ENCODE measurements at regions of chr10 and their contacts with region 1.

Region 1: DNA sequence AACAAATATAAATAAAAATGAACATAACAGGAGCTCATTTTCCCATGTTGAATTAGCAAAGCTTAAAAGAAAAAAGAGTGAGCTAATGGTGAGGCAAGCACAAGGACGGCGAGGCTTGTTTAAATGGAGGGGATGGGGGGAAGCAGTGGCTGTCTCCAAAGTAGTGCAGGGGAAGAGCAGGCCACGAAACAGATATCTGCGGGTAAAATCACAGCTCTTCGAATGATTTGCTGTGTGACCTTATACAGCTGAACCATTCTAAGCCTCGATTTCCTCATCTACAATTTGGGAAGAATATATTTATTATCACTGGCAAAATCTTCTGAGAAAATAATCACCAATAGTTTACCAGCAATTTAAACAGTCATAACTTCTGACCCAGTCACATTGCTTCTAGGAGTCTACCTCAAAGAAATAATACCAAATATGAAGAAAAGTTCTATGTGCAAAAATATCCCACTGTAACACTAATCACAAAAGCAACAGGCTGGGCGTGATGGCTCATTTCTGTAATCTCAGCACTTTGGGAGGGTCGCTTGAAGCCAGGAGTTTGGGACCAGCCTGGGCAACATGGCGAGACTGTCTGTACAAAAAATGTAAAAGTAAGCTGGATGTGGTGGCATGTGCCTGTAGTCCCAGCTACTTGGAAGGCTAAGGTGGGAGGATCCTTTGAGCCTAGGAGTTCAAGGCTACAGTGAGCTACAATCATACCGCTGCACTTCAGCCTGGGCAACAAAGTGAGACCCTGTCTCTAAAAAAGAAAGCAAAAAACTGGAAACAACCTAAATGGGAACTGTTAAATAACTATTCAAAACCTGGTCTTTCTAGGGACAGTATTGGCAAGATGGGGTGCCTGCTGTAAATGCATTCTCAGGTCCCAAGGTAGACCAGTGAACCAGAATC is 63.1 kb upstream of the ASAH2 start:
- DNase-seq: no peak
- ATAC-seq: no peak
- H3K4me3 ChIP-seq: no peak overlapping the region
- H3K4me3 Mint-ChIP-seq: no peak overlapping the region
- H3K27ac ChIP-seq: no peak overlapping the region
- H3K27ac Mint-ChIP-seq: no peak overlapping the region
- H3K4me1 ChIP-seq: no peaks in the 10 kb centered on the region
- H3K4me1 Mint-ChIP-seq: peaks cover 15 to 24% (median 16%) of the 10 kb centered on the region in 3 donors
- H3K27me3 ChIP-seq: no peaks in the 10 kb centered on the region
- H3K27me3 Mint-ChIP-seq: no peaks in the 10 kb centered on the region

Region 2: DNA sequence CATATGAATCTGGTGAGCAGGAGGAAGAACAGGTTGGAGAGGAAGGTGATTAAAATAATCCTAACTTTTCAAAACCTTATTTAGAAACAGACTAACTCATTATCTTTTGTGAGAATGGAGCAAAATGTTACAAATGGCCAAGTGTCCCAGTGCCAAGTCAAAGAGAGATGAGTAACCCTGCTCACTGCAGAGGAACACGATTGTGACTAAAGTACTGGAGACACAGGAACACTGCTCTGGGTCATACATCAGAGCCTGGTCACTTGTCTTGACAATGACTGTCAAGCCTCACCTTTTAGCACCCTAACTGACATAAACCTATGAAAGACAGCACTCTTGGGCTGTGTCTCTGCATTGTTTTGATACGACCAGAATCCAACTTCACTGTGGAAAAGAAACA is 200.6 kb after region 1 on chr10:
- CTCF ChIA-PET with region 1: no interaction called
- POLR2A ChIA-PET with region 1: no interaction called
- DNase-seq: no peak
- ATAC-seq: no peak
- H3K4me3 ChIP-seq: no peak overlapping the region
- H3K4me3 Mint-ChIP-seq: no peak overlapping the region
- H3K27ac ChIP-seq: no peak overlapping the region
- H3K27ac Mint-ChIP-seq: peak overlapping the region in 1 of 2 donors; percentile 5
- H3K4me1 ChIP-seq: peaks cover 21 to 25% of the 10 kb centered on the region in 2 experiments
- H3K4me1 Mint-ChIP-seq: peaks cover 65 to 69% (median 66%) of the 10 kb centered on the region in 3 donors
- H3K27me3 ChIP-seq: no peaks in the 10 kb centered on the region
- H3K27me3 Mint-ChIP-seq: no peaks in the 10 kb centered on the region

Region 3: DNA sequence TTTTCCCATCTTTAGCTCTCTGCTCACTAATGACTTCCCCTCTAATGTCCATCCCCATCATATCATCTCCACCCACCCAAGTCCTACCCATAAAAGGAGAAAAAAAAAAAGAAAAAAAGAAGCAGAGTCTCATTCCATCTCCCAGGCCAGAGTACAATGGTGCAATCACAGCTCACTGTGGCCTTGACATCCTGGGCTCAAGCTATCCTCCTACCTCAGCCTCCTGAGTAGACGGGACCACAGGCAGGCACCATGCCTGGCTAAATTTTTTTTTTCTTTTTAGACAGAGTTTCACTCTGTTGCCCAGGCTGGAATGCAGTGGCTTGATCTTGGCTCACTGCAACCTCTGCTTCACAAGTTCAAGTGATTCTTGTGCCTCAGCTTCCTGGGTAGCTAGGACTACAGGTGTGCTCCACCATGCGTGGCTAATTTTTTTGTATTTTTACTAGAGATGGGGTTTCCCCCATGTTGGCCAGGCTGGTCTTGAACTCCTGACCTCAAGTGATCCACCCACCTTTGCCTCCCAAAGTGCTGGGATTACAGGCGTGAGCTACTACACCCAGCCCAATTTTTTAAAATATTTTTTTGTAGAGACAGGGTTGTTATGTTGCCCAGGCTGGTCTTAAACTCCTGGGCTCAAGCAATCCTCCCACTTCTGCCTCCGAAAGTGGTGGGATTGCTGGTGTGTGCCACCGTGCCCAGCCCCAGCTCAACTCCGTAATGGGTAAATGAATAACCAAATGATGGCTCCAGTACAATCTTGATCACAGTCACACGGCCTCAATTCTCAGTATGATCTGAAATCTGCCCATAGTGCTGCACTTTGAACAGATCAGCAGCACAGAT is 333.9 kb after region 1 on chr10:
- CTCF ChIA-PET with region 1: no interaction called
- POLR2A ChIA-PET with region 1: interaction called in 1 of 2 experiments, 14 read pairs
- DNase-seq: no peak
- ATAC-seq: no peak
- H3K4me3 ChIP-seq: no peak overlapping the region
- H3K4me3 Mint-ChIP-seq: no peak overlapping the region
- H3K27ac ChIP-seq: no peak overlapping the region
- H3K27ac Mint-ChIP-seq: no peak overlapping the region
- H3K4me1 ChIP-seq: peaks cover 2 to 5% of the 10 kb centered on the region in 2 experiments
- H3K4me1 Mint-ChIP-seq: peaks cover 7 to 14% (median 7%) of the 10 kb centered on the region in 3 donors
- H3K27me3 ChIP-seq: no peaks in the 10 kb centered on the region
- H3K27me3 Mint-ChIP-seq: no peaks in the 10 kb centered on the region